ENCODE measurements at regions of chr7 and their contacts with region 1.

Region 1: GRCh38 chr7:41940760-41941343 is 238.0 kb upstream of the INHBA start:
- DNase-seq: peak; percentile 88
- H3K4me3 ChIP-seq: no peak overlapping the region
- H3K27ac ChIP-seq: no peak overlapping the region
- H3K4me1 ChIP-seq: peaks cover 12% of the 10 kb centered on the region
- H3K27me3 ChIP-seq: no peaks in the 10 kb centered on the region
- CTCF ChIP-seq: peak; percentile 89

Region 2: GRCh38 chr7:41385996-41386395 is 554.9 kb before region 1 on chr7:
- CTCF ChIA-PET with region 1: no interaction called
- POLR2A ChIA-PET with region 1: no interaction called
- intact Hi-C with region 1: no loop called
- DNase-seq: no peak
- H3K4me3 ChIP-seq: no peak overlapping the region
- H3K27ac ChIP-seq: no peak overlapping the region
- H3K4me1 ChIP-seq: no peaks in the 10 kb centered on the region
- H3K27me3 ChIP-seq: peaks cover 5% of the 10 kb centered on the region
- CTCF ChIP-seq: no peak

Region 3: DNA sequence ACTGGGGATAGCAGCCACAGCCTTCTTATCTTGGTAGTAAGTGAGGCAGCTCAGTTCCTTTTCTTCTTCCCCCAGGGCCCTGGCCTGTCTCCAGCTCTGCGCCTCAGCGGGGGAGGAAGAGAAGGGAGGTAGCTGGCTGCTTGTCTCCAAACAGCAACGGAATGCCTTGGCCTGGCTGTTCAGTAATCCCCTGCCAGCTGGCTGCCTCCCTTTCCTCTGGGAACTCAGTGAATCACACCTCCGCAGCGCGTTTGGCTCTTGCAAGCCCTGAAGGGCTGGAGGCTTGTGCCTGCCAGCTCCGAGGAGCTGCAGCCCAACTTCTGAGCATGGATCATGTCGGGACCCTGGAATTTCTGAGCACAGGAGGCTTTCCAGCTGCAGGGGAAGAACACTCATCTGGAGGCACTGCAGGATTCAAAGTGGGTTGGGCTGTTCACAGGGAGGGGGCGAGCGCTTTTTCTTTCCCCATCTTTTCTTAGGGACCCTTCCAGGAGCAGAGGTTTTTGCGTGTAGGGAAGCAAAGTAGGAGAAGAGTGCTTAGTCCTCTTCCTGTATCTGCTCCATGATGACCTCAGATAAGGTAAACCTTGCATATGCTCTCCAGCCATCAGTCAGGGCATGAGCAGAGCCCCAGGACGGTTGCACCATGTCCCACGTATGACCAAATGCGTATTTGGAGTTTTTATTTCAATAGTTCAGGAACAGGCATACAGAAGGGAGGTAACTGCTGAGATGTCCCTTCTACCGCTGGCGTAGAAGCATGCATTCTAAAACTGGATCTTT is 15.2 kb after region 1 on chr7:
- CTCF ChIA-PET with region 1: interaction called, 15 read pairs
- POLR2A ChIA-PET with region 1: interaction called, 3 read pairs
- intact Hi-C with region 1: no loop called
- DNase-seq: peak; percentile 99
- H3K4me3 ChIP-seq: no peak overlapping the region
- H3K27ac ChIP-seq: no peak overlapping the region
- H3K4me1 ChIP-seq: peaks cover 14% of the 10 kb centered on the region
- H3K27me3 ChIP-seq: no peaks in the 10 kb centered on the region
- CTCF ChIP-seq: no peak

Region 4: DNA sequence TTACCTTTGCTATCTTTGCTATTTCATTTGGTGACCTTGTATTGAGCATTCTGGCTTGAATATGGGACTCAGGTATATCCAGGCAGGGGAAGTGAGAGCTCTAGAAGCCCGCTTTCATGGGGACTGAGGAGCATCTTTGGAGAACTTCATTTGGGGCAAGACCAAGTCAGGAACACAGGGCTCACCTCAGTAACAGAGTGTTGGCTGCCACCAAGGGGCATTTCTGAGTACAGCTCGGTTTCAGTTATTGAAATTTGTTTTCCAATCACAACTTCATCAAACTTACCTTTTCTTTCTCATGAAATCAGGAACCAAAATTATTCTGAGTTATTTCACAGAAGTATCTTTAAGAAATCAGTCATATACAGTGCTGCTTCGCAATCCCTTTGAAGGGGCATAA is 633.8 kb after region 1 on chr7:
- CTCF ChIA-PET with region 1: interaction called, 4 read pairs
- POLR2A ChIA-PET with region 1: no interaction called
- intact Hi-C with region 1: loop called (anchors 5 kb)
- DNase-seq: peak; percentile 25
- H3K4me3 ChIP-seq: no peak overlapping the region
- H3K27ac ChIP-seq: no peak overlapping the region
- H3K4me1 ChIP-seq: peaks cover 8% of the 10 kb centered on the region
- H3K27me3 ChIP-seq: no peaks in the 10 kb centered on the region
- CTCF ChIP-seq: peak; percentile 59

Region 5: DNA sequence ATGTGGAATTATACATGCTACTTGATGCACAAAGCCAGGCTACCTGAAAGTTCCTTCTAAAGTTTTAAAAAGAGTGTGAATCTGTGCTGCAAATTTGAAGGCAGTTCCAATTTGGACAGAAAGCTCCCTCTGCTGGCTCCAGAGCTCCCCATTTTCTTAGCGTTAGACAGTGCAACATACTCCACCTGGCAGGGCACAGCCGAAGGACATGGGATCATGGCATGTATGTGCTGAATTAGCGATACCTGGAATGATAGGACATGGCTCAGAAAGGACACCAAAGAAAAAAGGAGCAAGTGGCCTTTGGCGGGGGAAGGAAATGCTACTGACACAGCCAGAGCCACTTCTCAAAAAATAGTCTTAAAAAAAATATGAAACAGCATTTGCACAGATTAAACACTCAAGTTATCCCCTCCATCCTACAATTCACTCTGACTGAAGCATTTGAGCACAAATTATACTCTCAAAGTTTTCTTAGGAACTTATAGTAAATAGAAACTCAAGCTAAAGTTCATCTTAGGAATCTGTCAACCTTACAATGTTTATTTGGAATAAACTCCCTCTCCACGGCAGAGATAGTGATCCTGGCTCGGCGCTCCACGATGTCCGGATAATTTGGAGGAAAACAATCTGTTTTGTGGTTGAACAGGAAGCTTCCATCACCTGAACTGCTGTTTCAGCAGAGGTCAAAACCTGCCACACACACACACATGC is 891.0 kb after region 1 on chr7:
- CTCF ChIA-PET with region 1: interaction called, 10 read pairs
- POLR2A ChIA-PET with region 1: no interaction called
- intact Hi-C with region 1: loop called (anchors 2 kb)
- DNase-seq: peak; percentile 60
- H3K4me3 ChIP-seq: no peak overlapping the region
- H3K27ac ChIP-seq: no peak overlapping the region
- H3K4me1 ChIP-seq: no peaks in the 10 kb centered on the region
- H3K27me3 ChIP-seq: no peaks in the 10 kb centered on the region
- CTCF ChIP-seq: peak; percentile 73

Region 6: DNA sequence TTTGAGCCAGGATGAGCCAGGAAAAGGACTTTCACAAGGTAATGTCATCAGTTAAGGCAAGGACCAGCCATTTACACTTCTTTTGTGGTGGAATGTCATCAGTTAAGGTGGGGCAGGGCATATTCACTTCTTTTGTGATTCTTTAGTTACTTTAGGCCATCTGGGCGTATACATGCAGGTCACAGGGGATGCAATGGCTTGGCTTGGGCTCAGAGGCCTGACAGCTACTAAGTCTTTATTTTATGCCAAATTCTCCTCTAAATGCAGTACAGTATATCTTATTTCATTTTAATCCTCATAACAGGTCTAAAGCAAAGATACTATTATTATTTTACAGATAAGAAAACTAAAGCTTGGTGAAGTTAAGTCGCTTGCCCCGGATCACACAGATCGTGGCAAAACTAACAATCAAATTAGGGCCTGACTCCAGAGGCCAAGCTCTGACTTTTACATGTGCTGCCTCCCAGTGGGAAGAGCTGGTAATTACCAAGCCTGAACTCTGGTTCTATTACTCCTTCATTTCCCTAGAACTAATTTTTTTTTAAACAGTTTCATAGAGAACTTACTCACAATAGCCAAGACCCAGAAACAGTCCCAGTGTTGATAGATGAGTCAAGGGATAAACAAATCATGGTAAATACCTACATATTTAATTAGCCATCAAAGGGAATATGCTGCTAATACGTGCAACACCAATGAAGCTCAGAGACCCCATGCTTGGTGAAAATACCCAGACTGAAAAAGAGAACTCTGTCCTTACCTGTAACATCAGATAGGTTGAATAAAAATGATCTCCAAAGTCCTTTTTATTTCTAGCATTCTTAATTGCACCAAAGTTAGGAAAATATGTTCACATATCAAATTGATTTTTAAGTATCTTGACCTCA is 935.6 kb after region 1 on chr7:
- CTCF ChIA-PET with region 1: interaction called, 47 read pairs
- POLR2A ChIA-PET with region 1: no interaction called
- intact Hi-C with region 1: loop called (anchors 1 kb)
- DNase-seq: peak; percentile 73
- H3K4me3 ChIP-seq: no peak overlapping the region
- H3K27ac ChIP-seq: no peak overlapping the region
- H3K4me1 ChIP-seq: no peaks in the 10 kb centered on the region
- H3K27me3 ChIP-seq: no peaks in the 10 kb centered on the region
- CTCF ChIP-seq: peak; percentile 81

Measured in A673 (cell line).